Activated T-helper 2 cell treated with anti-CD3 and anti-CD28 coated beads, Interferon-gamma antibody, Interleukin-2, Interleukin-4, amounts not matched to agents 10 μg/mL and 5 μg/mL and 100 μg/mL, durations not matched to agents 14 hours and 24 hours and 36 hours (primary cell): ENCODE measurements at regions of chr12 and their contacts with region 1.

Region 1: GRCh38 chr12:88241862-88242570 is 99.9 kb downstream of the TMTC3 start:
- DNase-seq: no peak
- H3K4me3 Mint-ChIP-seq: no peak overlapping the region
- H3K27ac Mint-ChIP-seq: peak overlapping the region; percentile 93
- H3K4me1 Mint-ChIP-seq: peaks cover 42% of the 10 kb centered on the region
- H3K27me3 Mint-ChIP-seq: no peaks in the 10 kb centered on the region

Region 2: DNA sequence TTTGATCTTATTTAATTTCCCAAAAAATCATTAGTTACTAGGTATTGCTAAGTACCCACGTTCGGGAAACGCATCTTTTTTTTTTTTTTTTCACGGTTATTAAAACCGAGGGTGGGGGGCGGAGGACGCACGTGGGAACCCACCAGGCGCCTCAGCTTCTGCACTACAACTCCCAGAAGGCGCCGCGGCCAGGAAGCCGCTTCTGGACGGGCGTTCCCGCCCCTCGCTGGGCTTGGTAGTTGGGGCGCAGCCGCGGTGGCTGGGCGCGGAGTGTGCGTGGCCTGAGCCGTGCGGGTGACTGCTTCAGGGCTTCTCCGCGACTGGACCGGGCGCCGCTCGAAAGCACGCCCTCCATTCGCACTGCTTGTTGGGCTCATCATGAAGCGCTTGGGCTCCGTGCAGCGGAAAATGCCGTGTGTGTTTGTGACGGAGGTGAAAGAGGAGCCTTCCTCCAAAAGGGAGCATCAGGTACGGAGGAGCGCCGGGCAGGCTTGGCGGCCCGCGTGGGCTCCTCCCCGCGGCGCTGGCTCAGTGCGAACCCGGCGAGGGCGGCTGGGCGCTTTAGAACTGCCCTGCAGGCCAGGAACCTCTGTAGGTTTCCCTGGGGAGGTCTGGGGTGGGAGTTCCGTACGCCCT is 206.6 kb before region 1 on chr12:
- intact Hi-C with region 1: loop called (anchors 10 kb)
- DNase-seq: peak; percentile 84
- H3K4me3 Mint-ChIP-seq: peak overlapping the region; percentile 99
- H3K27ac Mint-ChIP-seq: peak overlapping the region; percentile 95
- H3K4me1 Mint-ChIP-seq: peaks cover 45% of the 10 kb centered on the region
- H3K27me3 Mint-ChIP-seq: no peaks in the 10 kb centered on the region

Region 3: DNA sequence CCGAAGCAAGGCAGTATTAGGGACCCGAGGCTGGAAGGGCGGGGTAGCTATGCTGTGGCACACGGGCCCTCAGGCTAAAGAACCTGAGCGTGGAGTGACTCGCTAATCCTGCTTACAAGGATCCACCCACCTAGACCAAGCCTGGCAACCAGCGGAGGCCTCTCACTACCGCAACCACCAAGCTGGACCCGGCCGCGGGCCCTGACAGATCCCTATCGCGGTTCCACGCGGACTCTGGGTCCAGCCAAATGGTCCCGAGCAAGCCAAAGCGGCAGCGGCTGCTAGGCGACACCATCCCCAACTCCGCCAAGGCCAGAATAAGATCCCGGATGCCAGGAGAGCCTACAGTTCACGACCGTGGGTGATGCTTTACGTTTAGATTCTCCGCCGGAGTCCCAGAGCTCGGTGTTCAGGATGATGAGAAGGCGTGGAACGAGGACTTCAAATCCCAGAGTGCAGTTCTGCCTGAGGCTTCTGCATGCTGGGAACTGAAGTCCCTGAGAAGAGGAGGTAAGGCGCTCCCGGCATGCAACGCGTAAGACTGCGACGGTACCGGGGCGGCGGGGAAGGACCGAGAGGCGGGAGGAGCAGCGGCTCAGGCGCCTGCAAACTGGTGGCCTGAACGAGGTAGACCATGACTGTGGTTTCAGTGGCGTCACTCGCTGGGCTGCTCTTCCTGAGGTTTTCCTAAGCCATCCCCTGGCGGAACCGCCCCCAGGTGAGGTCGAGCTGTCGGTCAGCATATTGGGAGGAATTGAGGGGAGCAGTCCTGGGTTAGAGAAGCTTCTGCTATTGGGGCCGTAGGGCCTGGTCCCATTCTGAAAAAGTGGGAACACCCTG is 100.0 kb before region 1 on chr12 and contains the starts of genes CEP290 and TMTC3:
- intact Hi-C with region 1: loop called (anchors 2 kb)
- DNase-seq: peak; percentile 93
- H3K4me3 Mint-ChIP-seq: peak within 1 kb of the TSS; percentile 94
- H3K27ac Mint-ChIP-seq: peak within 1 kb of the TSS; percentile 91
- H3K4me1 Mint-ChIP-seq: peaks cover 34% of the 10 kb centered on the region
- H3K27me3 Mint-ChIP-seq: no peaks in the 10 kb centered on the region
- total RNA-seq, gene CEP290: 16.0 TPM in 2 replicates
- total RNA-seq, gene TMTC3: 7.2 and 8.1 TPM in 2 replicates

Region 4: GRCh38 chr12:88153959-88154358 is 88.1 kb before region 1 on chr12:
- intact Hi-C with region 1: loop called (anchors 5 kb)
- DNase-seq: no peak
- H3K4me3 Mint-ChIP-seq: no peak overlapping the region
- H3K27ac Mint-ChIP-seq: no peak overlapping the region
- H3K4me1 Mint-ChIP-seq: peaks cover 11% of the 10 kb centered on the region
- H3K27me3 Mint-ChIP-seq: no peaks in the 10 kb centered on the region

Region 5: GRCh38 chr12:88186003-88186402 is 56.0 kb before region 1 on chr12:
- intact Hi-C with region 1: loop called (anchors 5 kb)
- DNase-seq: no peak
- H3K4me3 Mint-ChIP-seq: no peak overlapping the region
- H3K27ac Mint-ChIP-seq: no peak overlapping the region
- H3K4me1 Mint-ChIP-seq: peaks cover 2% of the 10 kb centered on the region
- H3K27me3 Mint-ChIP-seq: no peaks in the 10 kb centered on the region

Region 6: DNA sequence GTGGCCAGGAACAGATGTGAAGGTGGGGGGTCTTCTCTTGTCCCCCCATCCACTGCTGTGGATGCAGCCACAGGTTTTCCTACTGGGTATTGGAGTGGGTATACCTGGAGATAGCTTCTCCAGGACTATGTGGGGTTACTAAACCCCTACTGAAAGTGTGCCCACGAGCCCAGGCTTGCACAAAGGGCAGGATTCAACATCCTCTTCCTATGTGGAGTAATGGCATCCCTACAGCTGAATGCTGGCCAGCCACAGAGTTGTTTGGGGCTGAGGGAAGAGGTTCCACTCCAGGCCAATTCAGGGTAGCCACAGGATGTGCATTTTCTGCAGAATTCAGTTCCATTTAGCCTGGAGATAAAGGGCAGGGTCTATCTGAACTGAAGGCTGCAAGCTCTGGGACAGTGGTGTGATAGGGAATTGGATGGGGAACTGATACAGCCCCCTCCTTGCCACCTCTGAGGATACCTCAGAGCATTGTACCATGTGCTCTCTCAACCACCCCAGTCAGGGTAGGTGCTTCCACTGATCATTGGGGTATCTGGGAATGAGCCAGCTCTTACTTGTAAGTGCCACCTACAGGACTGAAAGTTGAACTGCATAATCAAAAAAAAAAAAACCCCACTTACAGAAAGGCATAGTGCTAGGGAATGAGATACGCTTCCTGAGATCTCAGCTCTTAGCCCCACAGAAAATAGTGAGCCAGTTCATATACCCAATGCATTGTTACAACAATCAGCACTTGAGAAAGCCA is 151.2 kb after region 1 on chr12:
- intact Hi-C with region 1: loop called (anchors 1 kb)
- DNase-seq: no peak
- H3K4me3 Mint-ChIP-seq: no peak overlapping the region
- H3K27ac Mint-ChIP-seq: no peak overlapping the region
- H3K4me1 Mint-ChIP-seq: peaks cover 36% of the 10 kb centered on the region
- H3K27me3 Mint-ChIP-seq: peaks cover 4% of the 10 kb centered on the region

Region 7: DNA sequence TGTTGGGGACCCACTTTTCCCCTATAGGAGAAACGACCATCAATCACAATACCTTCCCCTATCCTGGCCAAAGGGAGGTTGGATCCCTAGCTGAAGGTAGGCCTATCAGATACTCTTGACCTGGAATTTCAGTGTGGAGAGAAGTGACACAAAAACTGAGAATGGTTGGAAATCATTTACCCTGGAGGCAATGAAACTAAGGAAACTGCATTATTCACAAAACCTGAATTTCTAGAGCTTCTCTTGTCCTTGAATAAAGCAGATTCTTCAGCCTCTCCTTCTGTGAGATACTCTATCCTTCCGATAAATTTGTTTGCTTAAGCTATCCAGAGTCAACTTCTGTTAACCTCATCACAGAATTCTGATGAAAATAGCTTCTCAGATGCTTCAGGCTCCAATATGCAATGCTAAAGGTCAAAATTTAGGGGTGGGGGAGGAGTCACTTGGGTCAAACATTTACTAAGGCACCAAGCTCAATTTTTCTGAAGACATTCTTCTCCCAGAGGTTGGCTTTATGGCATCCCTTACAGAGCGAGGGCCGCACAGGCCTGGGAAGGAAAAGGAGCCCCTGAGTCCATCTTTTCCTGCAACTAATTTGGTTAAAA is 1137.3 kb after region 1 on chr12:
- intact Hi-C with region 1: loop called (anchors 5 kb)
- DNase-seq: no peak
- H3K4me3 Mint-ChIP-seq: no peak overlapping the region
- H3K27ac Mint-ChIP-seq: no peak overlapping the region
- H3K4me1 Mint-ChIP-seq: peaks cover 43% of the 10 kb centered on the region
- H3K27me3 Mint-ChIP-seq: no peaks in the 10 kb centered on the region